B cell (primary cell): ENCODE measurements at regions of chr21 and their contacts with region 1.

Region 1: GRCh38 chr21:44294391-44295162 is 5.3 kb upstream of the PFKL start:
- DNase-seq: peak; percentile 61
- ATAC-seq: no peak
- H3K4me3 ChIP-seq: no peak overlapping the region
- H3K4me3 Mint-ChIP-seq: peak overlapping the region; percentile 32
- H3K27ac ChIP-seq: peak overlapping the region; percentile 29 to 46
- H3K27ac Mint-ChIP-seq: peak overlapping the region; percentile 53
- H3K4me1 ChIP-seq: peaks cover 44 to 60% of the 10 kb centered on the region in 2 donors
- H3K4me1 Mint-ChIP-seq: peaks cover 51% of the 10 kb centered on the region
- H3K27me3 ChIP-seq: no peaks in the 10 kb centered on the region
- H3K27me3 Mint-ChIP-seq: no peaks in the 10 kb centered on the region
- CTCF ChIP-seq: no peak

Region 2: GRCh38 chr21:44304877-44305293 is 10.3 kb after region 1 on chr21:
- CTCF ChIA-PET with region 1: interaction called, 10 read pairs
- POLR2A ChIA-PET with region 1: no interaction called
- intact Hi-C with region 1: no loop called
- DNase-seq: peak; percentile 69
- ATAC-seq: peak; percentile 32
- H3K4me3 ChIP-seq: no peak overlapping the region
- H3K4me3 Mint-ChIP-seq: peak overlapping the region; percentile 29
- H3K27ac ChIP-seq: no peak overlapping the region
- H3K27ac Mint-ChIP-seq: peak overlapping the region; percentile 87
- H3K4me1 ChIP-seq: peaks cover 35 to 47% of the 10 kb centered on the region in 2 donors
- H3K4me1 Mint-ChIP-seq: peaks cover 40% of the 10 kb centered on the region
- H3K27me3 ChIP-seq: no peaks in the 10 kb centered on the region
- H3K27me3 Mint-ChIP-seq: no peaks in the 10 kb centered on the region
- CTCF ChIP-seq: peak; percentile 65